HCT116 (cell line): ENCODE measurements at regions of chr10 and their contacts with region 1.

Region 1: DNA sequence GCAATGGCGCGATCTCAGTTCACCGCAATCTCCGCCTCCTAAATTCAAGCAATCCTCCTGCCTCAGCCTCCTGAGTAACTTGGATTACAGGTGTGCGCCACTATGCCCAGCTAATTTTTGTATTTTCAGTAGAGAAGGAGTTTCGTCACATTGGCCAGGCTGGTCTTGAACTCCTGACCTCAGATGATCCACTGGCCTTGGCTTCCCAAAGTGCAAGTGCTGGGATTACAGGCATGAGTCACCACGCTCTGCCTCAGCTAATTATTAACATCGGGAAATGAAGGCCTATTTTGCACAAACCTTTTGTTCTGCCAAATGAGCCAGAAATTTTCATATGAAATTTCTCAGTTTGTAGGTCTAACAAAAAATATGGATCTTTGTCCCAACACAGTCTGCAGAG is 106.7 kb upstream of the ODAD2 start:
- DNase-seq: no peak
- ATAC-seq: peak; percentile 74
- H3K4me3 ChIP-seq: no peak overlapping the region
- H3K27ac ChIP-seq: peak overlapping the region; percentile 96
- H3K4me1 ChIP-seq: peaks cover 43 to 70% of the 10 kb centered on the region in 2 experiments
- H3K27me3 ChIP-seq: no peaks in the 10 kb centered on the region
- CTCF ChIP-seq: no peak
- POLR2A ChIP-seq: no peak
- RAD21 ChIP-seq: 0 out of 2 replicates have a peak, but pooled peaks have one; percentile 10

Region 2: GRCh38 chr10:27783660-27784059 is 321.9 kb before region 1 on chr10:
- CTCF ChIA-PET with region 1: no interaction called
- POLR2A ChIA-PET with region 1: no interaction called
- RAD21 ChIA-PET with region 1: no interaction called
- intact Hi-C with region 1: loop called (anchors 10 kb)
- DNase-seq: peak; percentile 81
- ATAC-seq: peak; percentile 98
- H3K4me3 ChIP-seq: no peak overlapping the region
- H3K27ac ChIP-seq: peak overlapping the region; percentile 52
- H3K4me1 ChIP-seq: peaks cover 7 to 20% of the 10 kb centered on the region in 2 experiments; a peak in 3 of 4 replicates
- H3K27me3 ChIP-seq: no peaks in the 10 kb centered on the region
- CTCF ChIP-seq: peak; percentile 71 to 74 (median 74); a peak in 5 of 6 replicates
- POLR2A ChIP-seq: no peak
- RAD21 ChIP-seq: peak; percentile 92